Naive thymus-derived CD4-positive, alpha-beta T cell (primary cell): ENCODE measurements at regions of chr13 and their contacts with region 1.

Region 1: GRCh38 chr13:112587212-112587763 is 665 bp downstream of the TUBGCP3 start:
- DNase-seq: peak; percentile 32 to 82 (median 41)
- ATAC-seq: peak; percentile 69
- H3K4me3 ChIP-seq: peak overlapping the region; percentile 78
- H3K4me3 Mint-ChIP-seq: peak overlapping the region; percentile 86 to 98 (median 94)
- H3K27ac ChIP-seq: peak overlapping the region; percentile 81
- H3K27ac Mint-ChIP-seq: peak overlapping the region; percentile 69 to 94 (median 89)
- H3K4me1 ChIP-seq: peaks cover 18 to 20% of the 10 kb centered on the region in 2 donors
- H3K4me1 Mint-ChIP-seq: peaks cover 37 to 58% (median 43%) of the 10 kb centered on the region in 7 donors
- H3K27me3 ChIP-seq: no peaks in the 10 kb centered on the region
- H3K27me3 Mint-ChIP-seq: no peaks in the 10 kb centered on the region

Region 2: GRCh38 chr13:112052213-112052612 is 535.1 kb before region 1 on chr13:
- CTCF ChIA-PET with region 1: no interaction called
- POLR2A ChIA-PET with region 1: no interaction called
- intact Hi-C with region 1: no loop called
- DNase-seq: no peak
- ATAC-seq: no peak
- H3K4me3 ChIP-seq: no peak overlapping the region
- H3K4me3 Mint-ChIP-seq: no peak overlapping the region
- H3K27ac ChIP-seq: no peak overlapping the region
- H3K27ac Mint-ChIP-seq: no peak overlapping the region
- H3K4me1 ChIP-seq: no peaks in the 10 kb centered on the region
- H3K4me1 Mint-ChIP-seq: peaks cover 0 to 11% (median 4%) of the 10 kb centered on the region in 7 donors
- H3K27me3 ChIP-seq: peaks cover 3 to 13% of the 10 kb centered on the region in 2 donors
- H3K27me3 Mint-ChIP-seq: peaks cover 58 to 76% (median 65%) of the 10 kb centered on the region in 5 donors

Region 3: DNA sequence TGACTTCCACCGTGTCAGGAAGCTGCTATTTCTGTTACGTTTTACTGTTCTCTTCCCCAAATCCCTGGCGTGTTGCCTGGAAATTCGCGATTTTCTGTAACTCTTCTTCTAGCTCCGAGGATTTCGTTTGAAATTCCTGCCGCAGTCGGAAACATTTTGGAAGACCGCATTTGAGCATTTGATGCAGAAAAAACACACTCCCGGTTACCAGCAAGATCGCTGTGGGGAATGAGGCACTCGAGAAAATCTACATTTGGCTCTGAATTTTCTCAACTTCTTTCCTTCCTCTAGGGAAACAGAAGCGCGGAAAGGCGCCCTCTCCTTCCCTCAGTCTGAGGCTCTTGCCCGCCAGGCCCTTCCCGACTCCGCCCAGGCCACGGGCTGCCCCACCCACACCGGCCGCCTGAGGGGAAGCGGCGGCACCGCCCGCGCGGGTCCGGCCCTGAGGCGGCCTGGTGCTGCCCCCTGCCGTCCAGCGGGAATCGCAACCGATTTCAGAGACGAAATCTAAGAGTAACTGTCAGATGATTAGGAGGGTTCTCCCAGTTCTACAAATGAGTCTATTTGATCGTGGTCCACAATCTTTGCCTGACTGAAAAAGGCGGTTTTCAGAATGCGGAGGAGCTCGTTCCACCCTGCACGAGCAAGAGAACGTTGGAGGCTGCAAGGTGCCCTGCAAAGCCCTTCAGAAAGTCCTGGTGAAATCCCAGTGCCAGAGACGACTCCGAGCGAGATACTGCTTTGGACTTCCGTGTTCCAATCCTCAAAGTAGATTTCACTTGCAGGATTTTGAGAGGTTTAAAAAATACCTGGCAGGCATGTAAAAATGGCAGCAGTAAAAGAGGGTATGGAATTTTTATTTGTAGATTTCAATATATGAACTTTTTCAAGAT is 19.1 kb after region 1 on chr13:
- CTCF ChIA-PET with region 1: interaction called, 5 read pairs
- POLR2A ChIA-PET with region 1: interaction called, 3 read pairs
- intact Hi-C with region 1: loop called (anchors 1 kb)
- DNase-seq: peak; percentile 65 to 95 (median 77)
- ATAC-seq: peak; percentile 100
- H3K4me3 ChIP-seq: peak overlapping the region; percentile 51
- H3K4me3 Mint-ChIP-seq: peak overlapping the region; percentile 76 to 89 (median 86)
- H3K27ac ChIP-seq: no peak overlapping the region
- H3K27ac Mint-ChIP-seq: peak overlapping the region in 5 of 9 donors; percentile 3 to 43 (median 19)
- H3K4me1 ChIP-seq: no peaks in the 10 kb centered on the region
- H3K4me1 Mint-ChIP-seq: peaks cover 4 to 12% (median 10%) of the 10 kb centered on the region in 7 donors
- H3K27me3 ChIP-seq: no peaks in the 10 kb centered on the region
- H3K27me3 Mint-ChIP-seq: peaks cover 5 to 54% (median 23%) of the 10 kb centered on the region in 5 donors